MCF 10A (cell line): ENCODE measurements at regions of chr11 and their contacts with region 1.

Region 1: GRCh38 chr11:73661035-73661628 is 14.8 kb downstream of the PLEKHB1 start:
- DNase-seq: peak; percentile 87
- H3K4me3 Mint-ChIP-seq: no peak overlapping the region
- H3K27ac Mint-ChIP-seq: no peak overlapping the region
- H3K4me1 Mint-ChIP-seq: no peaks in the 10 kb centered on the region
- H3K27me3 Mint-ChIP-seq: no peaks in the 10 kb centered on the region
- CTCF ChIP-seq: peak; percentile 94

Region 2: GRCh38 chr11:73307323-73308002 is 353.7 kb before region 1 on chr11:
- CTCF ChIA-PET with region 1: interaction called, 8 read pairs
- POLR2A ChIA-PET with region 1: no interaction called
- intact Hi-C with region 1: loop called (anchors 1 kb)
- DNase-seq: peak; percentile 97
- H3K4me3 Mint-ChIP-seq: peak overlapping the region; percentile 73
- H3K27ac Mint-ChIP-seq: peak overlapping the region; percentile 6
- H3K4me1 Mint-ChIP-seq: peaks cover 21% of the 10 kb centered on the region
- H3K27me3 Mint-ChIP-seq: no peaks in the 10 kb centered on the region
- CTCF ChIP-seq: peak; percentile 80

Region 3: GRCh38 chr11:73404048-73404447 is 257.1 kb before region 1 on chr11:
- CTCF ChIA-PET with region 1: interaction called, 13 read pairs
- POLR2A ChIA-PET with region 1: interaction called, 4 read pairs
- intact Hi-C with region 1: loop called (anchors 1 kb)
- DNase-seq: peak; percentile 49
- H3K4me3 Mint-ChIP-seq: no peak overlapping the region
- H3K27ac Mint-ChIP-seq: no peak overlapping the region
- H3K4me1 Mint-ChIP-seq: no peaks in the 10 kb centered on the region
- H3K27me3 Mint-ChIP-seq: no peaks in the 10 kb centered on the region
- CTCF ChIP-seq: peak; percentile 55

Region 4: DNA sequence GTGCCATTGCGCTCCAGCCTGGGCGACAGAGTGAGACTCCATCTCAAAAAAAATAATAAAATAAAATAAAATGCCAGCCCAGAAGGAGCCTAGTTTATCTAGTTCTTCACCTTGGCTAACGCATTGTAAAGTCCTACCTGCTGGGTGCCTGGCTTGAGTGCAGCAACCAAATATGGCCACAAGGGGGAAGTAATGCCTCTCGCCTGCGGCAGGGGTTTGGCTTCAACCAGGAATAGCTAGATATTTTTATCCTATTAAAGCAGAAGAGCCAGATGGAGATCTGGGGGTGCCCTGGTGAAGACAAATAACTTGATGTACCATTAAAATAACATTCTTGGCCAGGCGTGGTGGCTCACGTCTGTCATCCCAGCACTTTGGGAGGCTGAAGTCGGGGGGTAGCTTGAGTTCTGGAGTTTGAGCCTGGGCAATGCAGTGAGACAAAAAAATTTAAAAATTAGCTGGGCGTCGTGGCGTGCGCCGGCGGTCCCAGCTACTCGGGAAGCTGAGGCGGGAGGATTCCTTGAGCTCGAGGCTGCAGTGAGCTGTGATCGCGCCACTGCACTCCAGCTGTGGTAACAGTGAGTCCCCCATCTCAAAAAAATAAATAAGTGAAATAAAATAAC is 35.3 kb before region 1 on chr11:
- CTCF ChIA-PET with region 1: interaction called, 67 read pairs
- POLR2A ChIA-PET with region 1: interaction called, 11 read pairs
- intact Hi-C with region 1: loop called (anchors 1 kb)
- DNase-seq: peak; percentile 77
- H3K4me3 Mint-ChIP-seq: no peak overlapping the region
- H3K27ac Mint-ChIP-seq: no peak overlapping the region
- H3K4me1 Mint-ChIP-seq: no peaks in the 10 kb centered on the region
- H3K27me3 Mint-ChIP-seq: peaks cover 30% of the 10 kb centered on the region
- CTCF ChIP-seq: peak; percentile 77